ENCODE measurements at regions of chr17 and their contacts with region 1.

Region 1: DNA sequence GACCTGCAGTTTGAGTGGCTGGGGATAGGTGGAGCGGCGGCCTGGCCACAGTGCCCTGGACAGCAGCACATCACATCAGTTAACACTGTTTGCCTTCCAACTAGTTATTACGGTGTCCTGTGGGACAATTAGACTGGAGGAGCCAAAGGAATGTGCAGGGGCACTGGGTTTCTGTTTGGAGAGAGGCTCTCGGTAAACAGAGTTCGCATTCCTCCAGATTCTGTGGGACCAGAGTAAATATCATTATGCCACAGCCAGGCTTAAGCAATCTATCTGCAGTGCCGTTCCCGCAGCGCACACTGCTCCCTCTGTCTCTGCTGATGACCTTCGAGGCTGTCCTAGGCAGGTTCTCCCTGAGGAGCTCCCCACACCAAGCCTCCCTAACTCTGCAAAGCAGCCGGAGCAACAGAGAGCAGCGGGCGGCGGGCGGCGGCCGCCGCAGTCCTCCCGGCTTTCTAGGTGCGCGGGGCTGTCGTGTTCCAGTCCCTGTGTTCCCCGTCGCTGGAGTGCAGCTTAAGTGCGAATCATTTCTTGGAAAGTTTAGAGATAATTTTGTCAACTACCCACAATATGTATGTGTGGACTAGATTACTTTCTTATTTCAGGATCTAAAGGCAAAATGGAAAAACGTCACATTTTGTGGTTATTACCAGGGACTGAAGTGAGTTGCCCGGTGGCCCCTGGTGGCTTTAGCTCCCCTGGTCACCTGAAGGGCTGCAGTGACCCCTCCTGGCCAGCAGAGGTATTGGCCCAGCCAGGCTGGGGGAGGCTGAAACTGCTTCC is 43.2 kb downstream of the PGS1 start:
- DNase-seq: peak; percentile 73
- ATAC-seq: peak; percentile 98
- H3K4me3 Mint-ChIP-seq: no peak overlapping the region
- H3K27ac Mint-ChIP-seq: no peak overlapping the region
- H3K4me1 Mint-ChIP-seq: peaks cover 2% of the 10 kb centered on the region
- H3K27me3 Mint-ChIP-seq: no peaks in the 10 kb centered on the region
- CTCF ChIP-seq: peak; percentile 69

Region 2: DNA sequence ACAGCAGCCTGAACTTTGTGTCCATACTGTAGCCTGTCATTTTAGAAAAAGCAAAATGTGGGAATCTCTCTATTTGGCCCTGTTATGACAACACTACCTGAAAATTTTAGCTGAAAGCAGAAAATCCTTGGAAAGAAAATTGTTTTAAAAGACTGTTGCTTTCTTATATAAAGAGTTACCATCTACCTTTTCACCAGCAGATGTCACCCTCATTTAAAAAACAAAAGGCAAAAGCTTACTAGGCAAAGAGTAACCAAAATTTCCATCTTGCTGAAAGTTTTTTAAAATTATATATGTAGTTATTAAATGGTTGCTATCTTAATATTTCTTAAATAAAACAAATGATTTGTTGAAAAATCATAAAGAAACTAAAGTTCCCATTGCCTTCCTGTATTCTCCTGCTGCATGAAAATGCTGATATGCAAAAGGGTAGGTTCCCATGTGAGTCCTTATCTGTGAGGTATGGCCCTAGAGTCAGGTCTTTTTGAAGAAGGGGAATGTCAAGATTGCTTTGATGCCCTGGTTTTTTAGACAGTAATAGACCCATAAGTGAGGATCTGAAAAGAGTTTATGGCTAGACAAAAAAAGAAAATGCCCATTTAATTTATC is 402.2 kb before region 1 on chr17:
- CTCF ChIA-PET with region 1: interaction called, 6 read pairs
- POLR2A ChIA-PET with region 1: no interaction called
- intact Hi-C with region 1: loop called (anchors 1 kb)
- DNase-seq: no peak
- ATAC-seq: no peak
- H3K4me3 Mint-ChIP-seq: no peak overlapping the region
- H3K27ac Mint-ChIP-seq: no peak overlapping the region
- H3K4me1 Mint-ChIP-seq: peaks cover 7% of the 10 kb centered on the region
- H3K27me3 Mint-ChIP-seq: no peaks in the 10 kb centered on the region
- CTCF ChIP-seq: no peak

Region 3: GRCh38 chr17:78082988-78083387 is 338.7 kb before region 1 on chr17:
- CTCF ChIA-PET with region 1: interaction called, 13 read pairs
- POLR2A ChIA-PET with region 1: interaction called, 4 read pairs
- intact Hi-C with region 1: loop called (anchors 1 kb)
- DNase-seq: no peak
- ATAC-seq: no peak
- H3K4me3 Mint-ChIP-seq: no peak overlapping the region
- H3K27ac Mint-ChIP-seq: no peak overlapping the region
- H3K4me1 Mint-ChIP-seq: no peaks in the 10 kb centered on the region
- H3K27me3 Mint-ChIP-seq: no peaks in the 10 kb centered on the region
- CTCF ChIP-seq: no peak

Region 4: DNA sequence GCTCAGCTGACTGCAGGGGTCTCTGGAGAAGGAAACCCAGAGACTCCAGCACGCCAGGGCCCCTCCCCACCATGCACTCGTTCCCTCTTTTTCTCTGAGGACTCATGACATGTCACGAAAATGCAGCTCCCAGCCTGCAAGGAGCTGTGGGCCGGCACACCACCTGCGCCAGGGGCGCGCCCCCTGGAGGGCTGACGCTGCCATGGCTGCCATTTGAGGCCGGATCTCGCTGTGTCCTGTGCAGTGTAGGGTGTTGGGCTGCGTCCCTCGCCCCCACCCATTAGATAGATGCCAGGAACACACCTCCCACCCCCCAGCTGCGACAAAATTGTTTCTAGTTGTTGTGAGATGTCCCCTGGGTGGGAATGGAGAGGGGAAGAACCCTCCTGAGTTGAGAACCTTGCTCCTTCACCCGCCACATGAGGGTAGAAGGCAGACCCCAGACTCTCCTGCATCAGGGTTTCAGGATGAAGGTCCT is 245.1 kb before region 1 on chr17:
- CTCF ChIA-PET with region 1: no interaction called
- POLR2A ChIA-PET with region 1: interaction called, 5 read pairs
- intact Hi-C with region 1: loop called (anchors 5 kb)
- DNase-seq: peak; percentile 76
- ATAC-seq: peak; percentile 69
- H3K4me3 Mint-ChIP-seq: no peak overlapping the region
- H3K27ac Mint-ChIP-seq: peak overlapping the region; percentile 63
- H3K4me1 Mint-ChIP-seq: peaks cover 79% of the 10 kb centered on the region
- H3K27me3 Mint-ChIP-seq: no peaks in the 10 kb centered on the region
- CTCF ChIP-seq: peak; percentile 92

Region 5: DNA sequence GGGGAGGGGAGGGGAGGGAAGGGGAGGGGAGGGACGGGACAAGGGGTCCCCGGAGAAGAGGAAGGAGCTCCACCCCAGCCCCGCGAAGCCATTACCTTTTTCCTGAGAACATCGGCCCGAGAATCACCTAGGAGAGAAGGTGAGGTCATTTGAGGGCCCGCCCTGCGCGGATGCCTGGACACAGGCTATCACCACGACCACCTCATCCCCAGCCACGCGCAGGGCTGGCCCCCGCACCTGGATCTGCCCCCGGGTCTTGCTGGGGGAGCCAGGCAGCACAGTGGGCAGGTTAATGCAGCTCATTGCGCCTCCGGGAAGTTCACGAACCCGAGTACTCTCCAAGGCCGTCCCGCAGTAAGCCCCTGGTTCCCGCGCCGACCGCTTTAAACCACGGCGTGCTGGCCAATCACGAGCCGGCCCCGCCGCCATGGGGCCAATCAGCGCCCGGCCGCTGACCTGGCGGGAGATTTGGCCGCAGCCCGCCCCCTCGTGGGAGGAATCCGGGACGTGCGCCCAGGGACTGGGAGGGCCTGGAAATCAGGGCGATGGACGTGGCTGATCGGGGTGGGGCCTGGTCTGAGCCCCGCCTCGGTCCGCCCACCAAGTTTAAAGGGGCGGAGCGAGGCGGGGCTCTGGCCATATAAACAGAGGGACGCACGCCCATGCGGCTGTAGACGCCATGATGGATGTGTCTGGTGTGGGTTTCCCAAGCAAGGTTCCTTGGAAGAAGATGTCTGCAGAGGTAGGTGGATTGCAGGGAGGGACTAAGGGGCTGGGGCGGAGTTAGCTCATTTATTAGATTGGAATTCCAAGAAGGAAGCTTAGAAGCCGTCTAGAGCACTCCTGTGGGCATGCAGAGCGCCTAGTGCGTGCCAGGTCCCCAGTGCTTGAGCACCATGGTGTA is 234.7 kb before region 1 on chr17 and contains the starts of genes AFMID and TK1:
- CTCF ChIA-PET with region 1: no interaction called
- POLR2A ChIA-PET with region 1: no interaction called
- intact Hi-C with region 1: loop called (anchors 5 kb)
- DNase-seq: peak; percentile 83
- ATAC-seq: peak; percentile 96
- H3K4me3 Mint-ChIP-seq: peak within 1 kb of the TSS; percentile 85
- H3K27ac Mint-ChIP-seq: peak within 1 kb of the TSS; percentile 54
- H3K4me1 Mint-ChIP-seq: peaks cover 18% of the 10 kb centered on the region
- H3K27me3 Mint-ChIP-seq: no peaks in the 10 kb centered on the region
- CTCF ChIP-seq: no peak
- total RNA-seq, gene AFMID: 11.2 and 15.4 TPM in 2 replicates
- total RNA-seq, gene TK1: 3.8 TPM in 2 replicates

Region 6: GRCh38 chr17:78289802-78290363 is 131.8 kb before region 1 on chr17:
- CTCF ChIA-PET with region 1: interaction called, 41 read pairs
- POLR2A ChIA-PET with region 1: interaction called, 3 read pairs
- intact Hi-C with region 1: loop called (anchors 1 kb)
- DNase-seq: peak; percentile 61
- ATAC-seq: peak; percentile 99
- H3K4me3 Mint-ChIP-seq: no peak overlapping the region
- H3K27ac Mint-ChIP-seq: no peak overlapping the region
- H3K4me1 Mint-ChIP-seq: peaks cover 3% of the 10 kb centered on the region
- H3K27me3 Mint-ChIP-seq: no peaks in the 10 kb centered on the region
- CTCF ChIP-seq: no peak